Heart left ventricle (tissue), 16 donors: ENCODE measurements at regions of chr20 and their contacts with region 1.

Region 1: DNA sequence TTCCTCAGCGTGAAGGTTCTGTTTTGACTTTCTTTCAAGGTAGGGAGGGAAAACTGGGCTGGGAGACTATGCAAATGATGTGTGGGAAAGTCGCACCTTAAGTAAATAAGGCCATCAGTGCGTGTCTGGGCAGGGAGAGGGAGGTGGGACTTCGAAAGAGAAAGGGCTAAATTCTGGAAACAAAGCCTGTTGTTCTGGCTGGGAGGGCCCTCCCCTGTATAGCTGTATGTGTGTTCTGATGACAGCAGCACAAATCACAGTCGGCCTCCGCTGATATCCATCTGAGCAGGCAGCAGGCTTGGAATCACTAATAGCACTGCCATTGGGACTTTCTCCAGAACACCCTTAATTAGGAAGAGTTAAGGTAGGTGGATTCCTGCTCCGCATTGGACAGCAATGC is 19.2 kb downstream of the JAG1 start:
- DNase-seq: no peak
- ATAC-seq: peak; percentile 27 to 29 (median 28)
- H3K4me3 ChIP-seq: peak overlapping the region in 1 of 12 donors; percentile 9
- H3K27ac ChIP-seq: peak overlapping the region in 11 of 12 donors; percentile 54 to 80 (median 65)
- H3K4me1 ChIP-seq: peaks cover 11 to 99% (median 77%) of the 10 kb centered on the region in 12 donors
- H3K27me3 ChIP-seq: no peaks in the 10 kb centered on the region
- CTCF ChIP-seq: no peak
- POLR2A ChIP-seq: no peak

Region 2: GRCh38 chr20:10553326-10553984 is 101.2 kb before region 1 on chr20:
- intact Hi-C with region 1: loop called in 4 of 10 experiments (anchors 5 to 10 kb)
- DNase-seq: peak; percentile 42 to 76 (median 60)
- ATAC-seq: peak; percentile 61 to 83 (median 66)
- H3K4me3 ChIP-seq: no peak overlapping the region
- H3K27ac ChIP-seq: no peak overlapping the region
- H3K4me1 ChIP-seq: peaks cover 0 to 43% (median 0%) of the 10 kb centered on the region in 12 donors
- H3K27me3 ChIP-seq: no peaks in the 10 kb centered on the region
- CTCF ChIP-seq: peak; percentile 68 to 89 (median 84)
- POLR2A ChIP-seq: no peak

Region 3: GRCh38 chr20:10731190-10731965 is 76.7 kb after region 1 on chr20:
- intact Hi-C with region 1: no loop called
- DNase-seq: peak in 1 of 5 donors; percentile 27
- ATAC-seq: peak in 2 of 4 donors; percentile 42 to 63
- H3K4me3 ChIP-seq: no peak overlapping the region
- H3K27ac ChIP-seq: no peak overlapping the region
- H3K4me1 ChIP-seq: peaks cover 0 to 22% (median 0%) of the 10 kb centered on the region in 12 donors
- H3K27me3 ChIP-seq: no peaks in the 10 kb centered on the region
- CTCF ChIP-seq: no peak
- POLR2A ChIP-seq: no peak

Region 4: DNA sequence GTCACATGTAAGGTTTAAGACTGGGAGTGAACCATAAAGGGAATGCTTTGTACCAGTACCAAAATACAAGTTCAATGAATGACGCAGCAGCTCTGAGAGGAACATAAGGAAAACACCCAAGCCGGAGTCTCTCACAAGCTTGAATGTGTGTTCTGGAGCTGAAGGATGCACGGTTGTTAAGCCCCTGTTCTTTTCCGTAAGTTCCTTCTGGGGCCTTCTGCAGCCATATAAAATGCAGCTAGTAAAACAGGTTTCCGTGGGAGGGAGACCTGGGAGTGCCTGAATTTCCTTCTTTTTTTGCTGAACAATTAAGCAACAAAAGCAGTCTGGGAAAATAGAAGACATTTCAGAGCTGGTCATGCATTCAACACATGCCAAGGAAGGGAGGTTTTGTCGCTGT is 92.4 kb after region 1 on chr20:
- intact Hi-C with region 1: no loop called
- DNase-seq: peak in 2 of 5 donors; percentile 20 to 26
- ATAC-seq: peak; percentile 47 to 80 (median 56)
- H3K4me3 ChIP-seq: peak overlapping the region in 1 of 12 donors; percentile 10
- H3K27ac ChIP-seq: peak overlapping the region; percentile 12 to 81 (median 61)
- H3K4me1 ChIP-seq: peaks cover 0 to 33% (median 6%) of the 10 kb centered on the region in 12 donors
- H3K27me3 ChIP-seq: no peaks in the 10 kb centered on the region
- CTCF ChIP-seq: no peak
- POLR2A ChIP-seq: no peak

Region 5: GRCh38 chr20:10946124-10946880 is 291.7 kb after region 1 on chr20:
- intact Hi-C with region 1: no loop called
- DNase-seq: no peak
- ATAC-seq: no peak
- H3K4me3 ChIP-seq: no peak overlapping the region
- H3K27ac ChIP-seq: no peak overlapping the region
- H3K4me1 ChIP-seq: no peaks in the 10 kb centered on the region
- H3K27me3 ChIP-seq: no peaks in the 10 kb centered on the region
- CTCF ChIP-seq: no peak
- POLR2A ChIP-seq: no peak